IMR-90 (cell line): ENCODE measurements at regions of chr18 and their contacts with region 1.

Region 1: GRCh38 chr18:29439394-29439793 is 1262.5 kb upstream of the CDH2 start:
- DNase-seq: no peak
- ATAC-seq: no peak
- H3K4me3 ChIP-seq: no peak overlapping the region
- H3K27ac ChIP-seq: no peak overlapping the region
- H3K4me1 ChIP-seq: no peaks in the 10 kb centered on the region
- H3K27me3 ChIP-seq: no peaks in the 10 kb centered on the region
- CTCF ChIP-seq: 0 out of 2 replicates have a peak, but pooled peaks have one; percentile 5
- POLR2A ChIP-seq: no peak
- RAD21 ChIP-seq: no peak

Region 2: DNA sequence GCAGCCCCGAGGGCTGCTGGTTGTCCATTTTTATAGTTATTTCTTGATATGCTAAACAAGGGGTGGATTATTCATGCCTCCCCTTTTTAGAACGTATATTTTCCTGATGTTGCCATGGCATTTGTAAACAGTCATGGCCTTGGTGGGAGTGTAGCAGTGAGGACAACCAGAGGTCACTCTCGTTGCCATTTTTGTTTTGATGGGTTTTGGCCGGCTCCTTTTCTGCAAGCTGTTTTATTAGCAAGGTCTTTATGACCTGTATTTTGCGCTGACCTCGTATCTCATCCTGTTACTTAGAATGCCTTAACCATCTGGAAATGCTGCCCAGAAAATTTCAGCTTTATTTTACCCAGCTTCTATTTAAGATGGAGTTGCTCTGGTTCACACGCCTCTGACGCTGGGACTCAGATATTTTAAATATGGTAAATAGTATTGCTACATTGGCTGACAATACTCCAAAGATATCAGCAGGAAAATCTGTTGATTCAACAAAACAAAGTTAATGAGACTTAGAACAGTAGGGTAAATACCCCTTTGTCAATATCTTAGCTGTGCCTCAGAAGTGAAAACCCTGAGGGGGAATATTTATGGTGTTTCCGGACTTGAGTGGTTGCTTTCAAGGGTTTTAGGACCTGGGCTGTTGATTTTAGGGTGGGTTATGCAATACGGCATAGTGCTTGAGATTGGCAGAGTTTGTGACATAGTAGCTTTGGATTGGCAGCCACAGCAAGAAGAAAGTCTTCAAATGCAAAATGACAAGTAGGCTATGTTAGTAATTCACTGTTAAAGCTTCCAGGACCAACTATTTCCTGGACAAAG is 436.4 kb before region 1 on chr18:
- CTCF ChIA-PET with region 1: no interaction called
- POLR2A ChIA-PET with region 1: no interaction called
- dilution Hi-C with region 1: no loop called
- in situ Hi-C with region 1: no loop called
- intact Hi-C with region 1: loop called (anchors 10 kb)
- DNase-seq: no peak
- ATAC-seq: no peak
- H3K4me3 ChIP-seq: no peak overlapping the region
- H3K27ac ChIP-seq: no peak overlapping the region
- H3K4me1 ChIP-seq: peaks cover 2% of the 10 kb centered on the region; the same call in 1 of the 2 replicates
- H3K27me3 ChIP-seq: no peaks in the 10 kb centered on the region
- CTCF ChIP-seq: no peak
- POLR2A ChIP-seq: no peak
- RAD21 ChIP-seq: no peak

Region 3: GRCh38 chr18:29191263-29191662 is 248.1 kb before region 1 on chr18:
- CTCF ChIA-PET with region 1: no interaction called
- POLR2A ChIA-PET with region 1: no interaction called
- dilution Hi-C with region 1: no loop called
- in situ Hi-C with region 1: no loop called
- intact Hi-C with region 1: loop called (anchors 10 kb)
- DNase-seq: peak; percentile 45
- ATAC-seq: peak; percentile 77
- H3K4me3 ChIP-seq: no peak overlapping the region
- H3K27ac ChIP-seq: no peak overlapping the region
- H3K4me1 ChIP-seq: peaks cover 4% of the 10 kb centered on the region; the same call in 1 of the 2 replicates
- H3K27me3 ChIP-seq: no peaks in the 10 kb centered on the region
- CTCF ChIP-seq: peak; percentile 49
- POLR2A ChIP-seq: no peak
- RAD21 ChIP-seq: peak; percentile 51